ENCODE measurements at regions of chr14 and their contacts with region 1.

Region 1: DNA sequence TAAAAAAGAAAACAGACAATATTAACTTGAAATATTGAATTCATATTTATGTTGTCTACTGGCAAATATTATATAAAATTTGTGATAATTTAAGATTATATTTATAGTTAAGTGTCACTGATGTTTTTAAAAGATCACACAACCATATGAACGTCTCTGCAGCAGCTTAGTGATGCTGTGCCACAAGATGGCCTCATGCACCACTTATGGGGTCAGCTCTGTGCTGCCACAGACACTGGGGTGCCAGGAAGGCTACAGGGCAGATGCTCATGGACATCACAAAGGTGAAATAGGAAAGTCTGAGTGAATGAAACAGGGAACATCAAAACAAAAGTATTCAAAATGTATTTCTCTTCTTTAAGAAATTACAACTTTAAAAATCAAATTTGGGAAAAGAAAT is 13.1 kb downstream of the ATXN3 start:
- DNase-seq: no peak
- H3K4me3 Mint-ChIP-seq: no peak overlapping the region
- H3K27ac Mint-ChIP-seq: no peak overlapping the region
- H3K4me1 Mint-ChIP-seq: no peaks in the 10 kb centered on the region
- H3K27me3 Mint-ChIP-seq: no peaks in the 10 kb centered on the region

Region 2: DNA sequence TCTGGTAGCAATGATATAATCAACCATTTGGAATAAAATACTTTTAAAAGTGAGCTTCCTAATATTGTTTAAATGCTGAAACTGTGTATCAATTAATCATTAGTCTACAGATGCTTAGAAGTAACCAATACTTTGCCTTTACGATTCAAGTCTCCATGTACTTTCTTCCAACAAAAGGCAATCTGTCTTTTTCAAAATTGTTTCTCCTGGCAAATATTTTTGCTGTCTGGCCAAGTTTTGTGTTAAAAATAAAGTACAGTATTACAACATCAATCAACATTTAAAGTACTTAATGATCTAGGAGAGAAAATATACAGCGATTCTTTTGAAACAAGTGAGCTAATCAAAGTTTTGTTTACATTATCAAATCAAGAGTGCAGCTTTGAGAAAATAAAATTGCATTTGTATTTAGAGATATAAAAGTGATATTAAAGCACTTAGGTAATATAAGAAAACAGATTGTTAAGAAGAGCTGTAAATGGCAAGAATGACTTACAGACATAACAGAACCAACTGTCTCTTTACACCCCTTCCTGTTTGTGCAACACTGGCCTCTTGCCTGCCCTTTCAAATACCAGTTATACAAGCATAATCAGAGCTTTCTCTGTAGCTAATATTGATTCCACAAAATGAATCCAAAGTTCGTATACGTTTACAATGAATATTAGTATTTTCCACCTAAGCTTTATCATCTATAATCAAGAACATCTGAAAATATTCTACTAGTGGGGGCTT is 107.6 kb before region 1 on chr14:
- CTCF ChIA-PET with region 1: no interaction called
- POLR2A ChIA-PET with region 1: no interaction called
- DNase-seq: no peak
- H3K4me3 Mint-ChIP-seq: no peak overlapping the region
- H3K27ac Mint-ChIP-seq: no peak overlapping the region
- H3K4me1 Mint-ChIP-seq: no peaks in the 10 kb centered on the region
- H3K27me3 Mint-ChIP-seq: no peaks in the 10 kb centered on the region

Region 3: DNA sequence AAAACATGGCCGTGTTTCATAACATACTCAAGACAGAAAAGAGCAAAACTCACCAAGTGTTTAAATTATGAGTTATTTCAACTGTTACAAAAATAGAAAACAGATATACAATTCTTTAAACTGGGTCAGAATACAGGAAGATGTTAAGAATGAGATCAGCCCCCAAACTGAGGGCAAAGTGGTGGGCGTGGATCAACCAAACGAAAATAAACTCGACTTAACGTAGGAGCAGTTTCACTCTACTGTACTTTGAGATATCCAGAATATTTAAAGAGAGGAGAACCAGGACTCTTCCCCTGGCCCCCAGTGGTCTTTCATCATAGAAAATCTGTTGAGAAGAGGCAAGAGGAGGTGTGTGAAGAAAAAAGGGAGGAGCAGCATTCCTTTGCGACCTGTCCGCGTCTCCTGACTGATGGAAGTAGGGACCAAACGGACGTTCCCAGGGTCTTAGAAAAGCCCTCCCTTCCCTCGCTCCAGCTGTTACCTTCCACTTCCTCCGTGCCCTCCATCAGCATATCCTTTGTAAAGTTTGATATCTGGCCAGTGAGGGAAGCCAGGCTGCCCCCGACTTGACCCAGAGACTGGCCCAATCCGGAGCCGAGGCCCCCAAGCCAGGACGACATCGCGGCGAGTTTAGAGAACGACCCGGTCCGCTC is 54.1 kb before region 1 on chr14:
- CTCF ChIA-PET with region 1: no interaction called
- POLR2A ChIA-PET with region 1: no interaction called
- DNase-seq: peak; percentile 17
- H3K4me3 Mint-ChIP-seq: peak overlapping the region; percentile 87
- H3K27ac Mint-ChIP-seq: peak overlapping the region; percentile 98
- H3K4me1 Mint-ChIP-seq: peaks cover 43% of the 10 kb centered on the region
- H3K27me3 Mint-ChIP-seq: no peaks in the 10 kb centered on the region

Region 4: DNA sequence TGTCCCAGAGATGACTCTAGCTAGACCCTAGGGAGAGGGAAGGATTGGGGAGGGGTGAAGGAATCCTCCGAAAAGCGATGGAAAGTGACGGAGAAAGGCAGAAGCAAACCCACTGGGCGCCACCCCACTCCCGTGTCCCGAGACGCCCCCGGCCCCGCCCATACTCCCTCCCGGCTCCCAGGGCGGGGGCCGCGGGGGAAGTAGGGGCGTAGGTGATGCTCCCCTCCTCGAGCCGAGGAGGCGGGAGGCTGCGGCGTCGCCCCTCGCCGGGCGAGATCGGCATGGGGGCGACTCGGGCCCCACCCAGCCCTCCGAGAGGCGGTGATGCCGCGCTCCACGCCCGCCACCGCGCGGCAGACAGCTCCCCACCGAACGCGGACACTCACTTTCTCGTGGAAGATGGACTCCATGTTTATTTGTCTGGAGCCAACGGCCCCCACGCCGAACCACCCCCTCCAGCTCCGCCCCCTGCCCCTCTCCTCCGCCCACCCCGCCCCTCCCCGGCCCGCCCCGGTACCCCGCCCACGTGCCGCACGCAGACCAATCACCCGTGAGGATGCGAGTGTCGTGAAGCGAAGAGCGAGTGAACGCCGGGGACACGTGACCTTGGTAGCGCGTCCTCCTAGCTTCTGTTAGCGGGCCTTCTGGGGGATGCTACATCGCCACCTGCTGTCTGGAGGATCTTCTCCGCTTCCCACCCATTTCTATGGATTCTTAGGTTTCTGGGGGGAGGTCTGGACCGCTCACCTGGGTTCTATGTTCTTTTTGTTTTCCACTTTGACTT is 13.0 kb after region 1 on chr14 and contains the start of gene ATXN3:
- CTCF ChIA-PET with region 1: interaction called, 10 read pairs
- POLR2A ChIA-PET with region 1: no interaction called
- DNase-seq: peak; percentile 96
- H3K4me3 Mint-ChIP-seq: peak within 1 kb of the TSS; percentile 94
- H3K27ac Mint-ChIP-seq: peak within 1 kb of the TSS; percentile 96
- H3K4me1 Mint-ChIP-seq: peaks cover 47% of the 10 kb centered on the region
- H3K27me3 Mint-ChIP-seq: no peaks in the 10 kb centered on the region
- total RNA-seq, gene ATXN3: 28.8 to 30.3 TPM

Region 5: GRCh38 chr14:92144708-92145107 is 51.4 kb after region 1 on chr14:
- CTCF ChIA-PET with region 1: no interaction called
- POLR2A ChIA-PET with region 1: no interaction called
- DNase-seq: no peak
- H3K4me3 Mint-ChIP-seq: no peak overlapping the region
- H3K27ac Mint-ChIP-seq: no peak overlapping the region
- H3K4me1 Mint-ChIP-seq: peaks cover 1% of the 10 kb centered on the region
- H3K27me3 Mint-ChIP-seq: no peaks in the 10 kb centered on the region

Region 6: DNA sequence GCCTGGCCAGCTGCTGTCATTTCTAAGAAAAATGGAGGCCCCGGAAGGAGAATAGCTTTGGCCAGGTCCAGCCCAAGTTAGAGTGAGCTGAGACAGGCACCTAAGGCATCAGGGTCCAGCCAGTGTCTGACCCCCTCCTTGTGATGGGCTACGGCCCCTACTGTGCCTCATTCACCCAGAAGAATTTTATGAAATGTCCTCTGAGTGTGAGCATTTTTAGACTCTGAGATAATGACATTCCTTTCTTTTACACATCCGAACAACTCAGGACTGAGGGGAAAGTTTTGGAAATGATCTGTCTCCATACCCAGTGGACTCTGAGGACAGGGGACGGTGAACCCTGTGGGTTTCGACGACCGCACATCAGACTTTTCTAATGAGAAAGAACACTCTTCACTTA is 280.0 kb after region 1 on chr14:
- CTCF ChIA-PET with region 1: no interaction called
- POLR2A ChIA-PET with region 1: no interaction called
- DNase-seq: no peak
- H3K4me3 Mint-ChIP-seq: no peak overlapping the region
- H3K27ac Mint-ChIP-seq: no peak overlapping the region
- H3K4me1 Mint-ChIP-seq: no peaks in the 10 kb centered on the region
- H3K27me3 Mint-ChIP-seq: peaks cover under 1% of the 10 kb centered on the region

Measured in activated CD4-positive, alpha-beta T cell treated with anti-CD3 and anti-CD28 coated beads, Interleukin-2, amount 10 ng/mL, durations not matched to agents 7 days and 5 days (primary cell).